ENCODE measurements at regions of chr3 and their contacts with region 1.

Region 1: DNA sequence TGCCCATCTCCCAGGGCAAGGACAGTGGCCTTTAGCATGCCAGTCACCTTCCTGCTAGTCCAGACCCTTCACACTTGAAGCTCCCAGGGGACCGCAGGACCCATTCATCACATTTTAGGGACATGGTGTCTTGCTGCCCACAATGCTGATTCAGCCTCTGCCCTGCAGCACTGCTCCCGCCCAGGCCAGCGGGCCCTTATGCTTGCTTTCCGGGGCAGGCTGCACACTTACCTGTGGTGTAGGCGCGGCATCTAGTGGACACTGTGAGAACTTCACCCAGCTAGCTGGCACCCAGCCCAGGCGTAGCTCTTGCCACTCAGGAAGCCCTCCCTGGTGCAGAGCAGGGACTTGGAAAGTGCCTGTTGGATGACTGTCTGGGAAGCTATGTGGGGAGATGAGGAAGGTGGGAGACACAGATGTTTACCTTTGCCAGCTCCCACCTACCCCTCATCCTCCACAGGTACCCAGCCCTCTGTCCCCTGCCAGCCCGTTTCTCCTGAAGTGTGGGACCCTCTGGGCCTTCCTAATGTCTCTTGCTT is 26.2 kb upstream of the NR2C2 start:
- DNase-seq: peak; percentile 79 to 94 (median 86)
- H3K4me3 ChIP-seq: no peak overlapping the region
- H3K27ac ChIP-seq: no peak overlapping the region
- H3K27me3 ChIP-seq: peaks cover 0 to 1% (median 0%) of the 10 kb centered on the region in 45 donors
- CTCF ChIP-seq: peak; percentile 87 to 100 (median 98)

Region 2: GRCh38 chr3:13895155-13896105 is 1025.7 kb before region 1 on chr3:
- intact Hi-C with region 1: loop called in 1 of 2 experiments (anchors 5 kb)
- DNase-seq: peak; percentile 75 to 96 (median 91)
- H3K4me3 ChIP-seq: peak overlapping the region; percentile 40 to 90 (median 75)
- H3K27ac ChIP-seq: peak overlapping the region in 46 of 59 donors; percentile 9 to 85 (median 46)
- H3K27me3 ChIP-seq: no peaks in the 10 kb centered on the region
- CTCF ChIP-seq: peak in 17 of 56 donors; percentile 8 to 54 (median 21)

Region 3: DNA sequence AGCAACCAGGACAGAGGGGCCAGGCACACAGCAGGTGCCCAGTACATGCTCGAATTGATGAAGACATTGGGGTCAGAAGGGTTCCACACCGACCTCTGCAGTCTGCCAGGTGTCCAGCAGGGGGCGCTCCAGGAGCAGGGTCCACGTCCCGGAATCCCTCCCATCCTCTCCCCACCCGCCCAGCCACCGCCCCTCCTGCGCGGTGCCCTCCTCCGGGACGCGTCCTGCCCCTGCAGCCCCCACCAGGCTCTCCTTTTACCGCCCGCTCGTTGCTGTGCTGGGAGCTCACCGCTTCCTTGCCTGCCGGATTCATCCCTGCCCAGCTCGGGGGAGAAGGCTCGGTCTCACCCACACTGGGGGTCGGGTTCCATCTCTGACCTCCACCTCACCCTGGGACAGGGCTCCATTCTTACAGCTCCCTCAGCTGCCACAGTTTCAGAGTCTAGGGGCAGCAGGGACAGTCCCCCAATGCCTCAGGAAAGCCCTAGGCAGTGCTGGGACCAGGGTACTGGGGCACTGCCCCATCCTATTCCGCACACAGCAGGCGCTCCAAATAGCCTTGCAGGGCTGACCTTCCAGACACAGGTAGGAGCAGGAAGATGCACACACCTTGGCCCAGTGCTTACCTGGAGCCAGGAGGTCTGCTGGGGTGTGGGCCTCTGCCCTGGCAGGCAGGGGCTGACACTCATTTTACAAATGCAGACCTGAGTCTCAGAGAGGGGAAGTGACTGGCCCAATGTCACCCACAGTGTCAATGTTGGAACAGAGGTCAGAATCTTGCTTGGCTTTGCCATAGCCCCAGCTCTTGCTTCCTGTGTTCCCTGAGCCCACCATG is 412.0 kb before region 1 on chr3:
- intact Hi-C with region 1: loop called in 1 of 2 experiments (anchors 5 kb)
- DNase-seq: peak in 9 of 10 donors; percentile 44 to 67 (median 63)
- H3K4me3 ChIP-seq: peak overlapping the region in 14 of 59 donors; percentile 12 to 39 (median 24)
- H3K27ac ChIP-seq: peak overlapping the region in 2 of 59 donors; percentile 23 to 48
- H3K27me3 ChIP-seq: no peaks in the 10 kb centered on the region
- CTCF ChIP-seq: peak; percentile 79 to 100 (median 94)

Region 4: GRCh38 chr3:14678015-14678503 is 243.1 kb before region 1 on chr3:
- intact Hi-C with region 1: loop called (anchors 1 to 2 kb)
- DNase-seq: no peak
- H3K4me3 ChIP-seq: no peak overlapping the region
- H3K27ac ChIP-seq: no peak overlapping the region
- H3K27me3 ChIP-seq: no peaks in the 10 kb centered on the region
- CTCF ChIP-seq: no peak

Region 5: GRCh38 chr3:15064835-15065549 is 143.8 kb after region 1 on chr3 and contains the start of gene MRPS25:
- intact Hi-C with region 1: loop called in 1 of 2 experiments (anchors 5 kb)
- DNase-seq: peak; percentile 77 to 92 (median 86)
- H3K4me3 ChIP-seq: peak within 1 kb of the TSS; percentile 69 to 100 (median 93)
- H3K27ac ChIP-seq: peak within 1 kb of the TSS in 56 of 59 donors; percentile 12 to 95 (median 80)
- H3K27me3 ChIP-seq: no peaks in the 10 kb centered on the region
- CTCF ChIP-seq: peak in 37 of 56 donors; percentile 10 to 51 (median 29)
- total RNA-seq, gene MRPS25: 54.3 to 115 (median 83.0) TPM

Measured in dorsolateral prefrontal cortex (tissue), 120 donors.